ENCODE measurements at regions of chr1 and their contacts with region 1.

Region 1: GRCh38 chr1:114511032-114511785 is at the start of gene TRIM33:
- ATAC-seq: peak; percentile 82 to 91 (median 86)
- H3K4me3 ChIP-seq: peak within 1 kb of the TSS; percentile 59 to 95 (median 73)
- H3K27ac ChIP-seq: peak within 1 kb of the TSS; percentile 89 to 95
- H3K4me1 ChIP-seq: peaks cover 18 to 20% of the 10 kb centered on the region in 2 donors
- total RNA-seq, gene TRIM33: 20.2 to 63.0 (median 51.4) TPM

Region 2: DNA sequence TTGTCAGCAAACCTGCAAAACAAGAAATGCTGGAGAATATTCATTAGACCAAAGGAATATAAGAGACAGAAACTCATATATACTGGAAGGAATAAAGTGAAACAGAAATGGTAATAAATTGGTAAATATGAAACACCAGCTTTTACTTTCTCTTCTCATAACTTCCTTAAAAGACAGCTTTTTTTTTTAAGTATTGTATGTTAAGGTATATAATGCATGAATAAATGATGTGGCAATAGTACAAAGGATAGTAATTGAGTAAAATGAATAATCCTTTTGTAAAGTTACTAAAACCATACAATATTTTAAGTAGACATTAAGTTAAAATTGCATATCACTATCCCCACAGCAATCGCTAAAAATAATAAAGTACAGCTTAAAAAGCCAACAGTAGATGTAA is 65.0 kb before region 1 on chr1:
- in situ Hi-C with region 1: no loop called
- ATAC-seq: no peak
- H3K4me3 ChIP-seq: no peak overlapping the region
- H3K27ac ChIP-seq: no peak overlapping the region
- H3K4me1 ChIP-seq: no peaks in the 10 kb centered on the region

Region 3: DNA sequence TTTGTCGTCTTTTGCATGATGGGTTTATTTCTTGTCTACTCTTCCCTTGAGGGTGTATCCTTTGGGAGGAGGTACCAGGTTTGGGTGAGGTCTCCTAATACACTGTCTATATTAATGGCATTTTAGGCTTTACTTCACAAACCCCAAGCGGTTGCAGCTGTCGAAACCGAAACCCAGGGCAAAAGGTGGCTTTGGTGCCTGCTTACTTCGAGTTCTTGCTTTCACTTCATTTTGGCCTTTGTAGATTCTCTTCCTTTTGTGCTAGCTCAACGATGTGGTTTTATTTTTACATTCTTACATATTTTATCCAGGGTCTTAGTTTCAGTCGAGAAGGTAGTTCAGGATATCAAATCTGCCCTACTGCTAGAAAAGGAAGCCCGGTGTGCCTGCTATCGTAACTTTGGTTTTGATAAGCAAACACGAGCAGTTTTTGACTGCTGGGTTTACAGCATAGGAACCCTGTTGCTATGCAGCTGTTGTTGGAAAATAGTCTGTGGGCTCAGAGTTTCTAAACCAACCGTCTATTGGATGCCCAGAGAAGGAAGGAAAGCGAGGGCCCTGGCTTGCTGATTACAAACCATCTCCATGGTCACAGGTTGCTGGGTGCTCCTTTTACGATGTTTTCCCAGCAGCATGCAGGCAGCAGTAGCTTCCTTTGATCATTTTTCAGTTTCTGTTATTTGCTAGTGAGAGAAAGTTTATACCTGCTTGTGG is 587.9 kb after region 1 on chr1:
- in situ Hi-C with region 1: loop called in 1 of 9 experiments (anchors 25 kb)
- ATAC-seq: peak in 5 of 8 experiments; percentile 39 to 99 (median 76)
- H3K4me3 ChIP-seq: peak overlapping the region in 1 of 5 donors; percentile 19
- H3K27ac ChIP-seq: no peak overlapping the region
- H3K4me1 ChIP-seq: peaks cover 0 to 7% of the 10 kb centered on the region in 2 donors